Heart left ventricle (tissue), 16 donors: ENCODE measurements at regions of chr15 and their contacts with region 1.

Region 1: GRCh38 chr15:39920510-39921273 is 626 bp upstream of the GPR176 start:
- DNase-seq: peak; percentile 82 to 88 (median 83)
- ATAC-seq: peak; percentile 82 to 97 (median 96)
- H3K4me3 ChIP-seq: peak overlapping the region; percentile 47 to 84 (median 64)
- H3K27ac ChIP-seq: peak overlapping the region; percentile 27 to 80 (median 70)
- H3K4me1 ChIP-seq: peaks cover 0 to 25% (median 13%) of the 10 kb centered on the region in 12 donors
- H3K27me3 ChIP-seq: peaks cover 7 to 41% (median 11%) of the 10 kb centered on the region in 9 donors
- CTCF ChIP-seq: peak in 5 of 12 donors; percentile 7 to 23 (median 22)
- POLR2A ChIP-seq: peak in 1 of 2 donors; percentile 49

Region 2: DNA sequence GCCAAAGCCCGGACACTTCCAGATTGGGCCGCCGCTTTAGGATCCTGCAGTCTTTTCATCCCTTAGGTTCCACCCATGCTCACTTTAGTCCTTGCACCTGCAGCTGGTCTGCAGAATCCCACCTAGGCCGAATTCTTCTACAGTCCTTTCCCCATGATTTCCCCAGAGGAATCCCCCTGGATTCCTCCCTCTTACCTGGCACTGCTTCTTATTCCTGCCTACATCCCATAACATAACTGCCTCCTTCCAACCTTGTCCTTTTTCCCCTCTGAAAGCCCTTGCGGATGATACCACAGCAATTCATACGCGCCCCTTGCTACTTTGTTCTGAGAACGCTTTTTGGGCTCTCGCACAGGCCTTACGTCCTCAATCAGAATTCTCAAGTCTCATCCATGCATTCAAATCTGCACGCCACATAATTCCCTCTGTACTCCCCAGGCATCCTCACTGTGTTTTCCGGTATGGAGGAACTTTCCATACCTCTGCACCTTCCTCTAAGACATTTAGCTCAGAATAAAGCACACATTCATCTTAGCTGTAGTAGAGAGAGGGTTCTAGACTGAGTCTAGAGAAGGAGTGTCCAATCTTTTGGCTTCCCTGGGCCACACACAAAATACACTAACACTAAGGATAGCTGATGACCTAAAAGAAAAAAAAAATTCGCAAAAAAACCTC is 13.8 kb after region 1 on chr15:
- intact Hi-C with region 1: loop called in 1 of 10 experiments (anchors 2 kb)
- DNase-seq: no peak
- ATAC-seq: peak in 1 of 4 donors; percentile 4
- H3K4me3 ChIP-seq: peak overlapping the region; percentile 39 to 93 (median 81)
- H3K27ac ChIP-seq: peak overlapping the region; percentile 64 to 97 (median 84)
- H3K4me1 ChIP-seq: peaks cover 0 to 51% (median 28%) of the 10 kb centered on the region in 12 donors
- H3K27me3 ChIP-seq: no peaks in the 10 kb centered on the region
- CTCF ChIP-seq: no peak
- POLR2A ChIP-seq: no peak

Region 3: GRCh38 chr15:39976291-39977274 is 55.9 kb after region 1 on chr15:
- intact Hi-C with region 1: no loop called
- DNase-seq: peak; percentile 63 to 82 (median 74)
- ATAC-seq: peak; percentile 76 to 94 (median 92)
- H3K4me3 ChIP-seq: peak overlapping the region; percentile 12 to 78 (median 58)
- H3K27ac ChIP-seq: peak overlapping the region in 10 of 12 donors; percentile 44 to 88 (median 76)
- H3K4me1 ChIP-seq: peaks cover 0 to 14% (median 5%) of the 10 kb centered on the region in 12 donors
- H3K27me3 ChIP-seq: no peaks in the 10 kb centered on the region
- CTCF ChIP-seq: peak in 10 of 12 donors; percentile 10 to 73 (median 58)
- POLR2A ChIP-seq: no peak

Region 4: DNA sequence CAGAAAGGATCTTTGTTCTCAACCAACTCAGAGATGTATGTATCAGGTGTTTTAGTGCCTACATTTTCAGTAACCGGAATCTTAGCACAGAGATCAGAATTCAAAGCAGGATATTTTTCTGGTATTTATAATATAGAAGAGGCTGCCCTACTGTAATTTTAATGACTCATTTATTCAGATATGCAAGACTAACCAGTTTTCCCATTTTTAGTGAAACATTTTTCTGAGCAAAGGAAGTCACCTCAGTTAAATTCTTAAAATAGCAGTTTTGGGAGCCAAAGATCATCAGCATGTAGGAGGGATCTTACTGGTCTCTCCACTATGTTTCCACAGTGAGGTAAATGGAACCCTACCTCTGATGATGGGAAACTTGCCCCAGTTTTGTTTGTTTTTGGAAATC is 76.3 kb after region 1 on chr15:
- intact Hi-C with region 1: no loop called
- DNase-seq: no peak
- ATAC-seq: no peak
- H3K4me3 ChIP-seq: no peak overlapping the region
- H3K27ac ChIP-seq: no peak overlapping the region
- H3K4me1 ChIP-seq: no peaks in the 10 kb centered on the region
- H3K27me3 ChIP-seq: no peaks in the 10 kb centered on the region
- CTCF ChIP-seq: no peak
- POLR2A ChIP-seq: no peak